Activated naive CD4-positive, alpha-beta T cell treated with anti-CD3 and anti-CD28 coated beads for 36 hours (primary cell): ENCODE measurements at regions of chr11 and their contacts with region 1.

Region 1: GRCh38 chr11:84564180-84564866 is 1062.8 kb downstream of the DLG2 start:
- DNase-seq: peak; percentile 54
- H3K4me3 Mint-ChIP-seq: no peak overlapping the region
- H3K27ac Mint-ChIP-seq: no peak overlapping the region
- H3K4me1 Mint-ChIP-seq: no peaks in the 10 kb centered on the region
- H3K27me3 Mint-ChIP-seq: no peaks in the 10 kb centered on the region

Region 2: DNA sequence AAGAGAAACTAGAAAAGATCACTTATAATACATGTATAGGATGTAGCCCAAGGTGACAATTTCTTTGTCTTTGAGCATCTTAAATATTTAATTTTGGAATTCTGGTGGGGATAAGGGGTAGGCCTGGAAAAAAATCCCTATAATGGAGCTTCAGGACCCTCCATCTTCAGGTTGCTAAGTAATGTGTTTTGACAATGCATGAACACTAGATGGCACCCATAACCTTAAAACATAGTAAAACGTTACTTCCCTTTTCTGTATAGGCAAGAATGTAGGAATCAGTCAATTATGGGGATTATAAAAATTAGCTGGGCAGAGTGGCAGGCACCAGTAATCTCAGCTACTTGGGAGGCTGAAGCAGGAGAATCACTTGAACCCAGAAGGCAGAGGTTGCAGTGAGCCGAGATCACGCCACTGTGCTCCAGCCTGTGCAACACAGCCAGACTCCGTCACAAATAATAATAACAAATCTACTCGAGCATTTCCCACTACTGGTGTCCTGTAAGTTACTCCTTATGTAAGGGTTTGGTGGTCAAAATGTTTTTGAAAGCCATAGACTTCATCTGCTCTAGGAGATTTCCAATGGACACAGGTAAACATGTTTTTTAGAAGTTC is 736.3 kb before region 1 on chr11:
- CTCF ChIA-PET with region 1: interaction called, 4 read pairs
- intact Hi-C with region 1: loop called (anchors 1 kb)
- DNase-seq: no peak
- H3K4me3 Mint-ChIP-seq: no peak overlapping the region
- H3K27ac Mint-ChIP-seq: no peak overlapping the region
- H3K4me1 Mint-ChIP-seq: peaks cover 2% of the 10 kb centered on the region
- H3K27me3 Mint-ChIP-seq: no peaks in the 10 kb centered on the region

Region 3: DNA sequence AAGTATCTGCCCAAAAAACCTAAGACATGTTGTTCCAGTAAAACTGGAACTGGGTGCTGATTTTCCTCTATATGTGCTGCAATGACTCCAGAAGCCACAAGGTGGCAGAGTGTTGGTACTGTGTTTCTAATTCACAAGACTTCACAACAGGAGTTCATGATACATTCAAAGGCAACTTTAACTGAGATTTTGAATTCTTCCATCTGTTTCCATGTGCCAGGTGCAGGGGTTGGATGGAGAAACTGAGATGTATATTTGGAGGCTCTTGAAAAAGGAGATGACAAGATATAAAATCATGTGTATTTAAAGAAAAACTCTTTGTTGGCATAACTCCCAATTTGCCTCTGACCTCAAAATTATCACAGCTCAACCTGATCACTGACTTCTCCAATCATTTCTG is 179.6 kb before region 1 on chr11:
- CTCF ChIA-PET with region 1: interaction called, 4 read pairs
- intact Hi-C with region 1: loop called (anchors 1 kb)
- DNase-seq: peak; percentile 51
- H3K4me3 Mint-ChIP-seq: no peak overlapping the region
- H3K27ac Mint-ChIP-seq: no peak overlapping the region
- H3K4me1 Mint-ChIP-seq: no peaks in the 10 kb centered on the region
- H3K27me3 Mint-ChIP-seq: no peaks in the 10 kb centered on the region

Region 4: DNA sequence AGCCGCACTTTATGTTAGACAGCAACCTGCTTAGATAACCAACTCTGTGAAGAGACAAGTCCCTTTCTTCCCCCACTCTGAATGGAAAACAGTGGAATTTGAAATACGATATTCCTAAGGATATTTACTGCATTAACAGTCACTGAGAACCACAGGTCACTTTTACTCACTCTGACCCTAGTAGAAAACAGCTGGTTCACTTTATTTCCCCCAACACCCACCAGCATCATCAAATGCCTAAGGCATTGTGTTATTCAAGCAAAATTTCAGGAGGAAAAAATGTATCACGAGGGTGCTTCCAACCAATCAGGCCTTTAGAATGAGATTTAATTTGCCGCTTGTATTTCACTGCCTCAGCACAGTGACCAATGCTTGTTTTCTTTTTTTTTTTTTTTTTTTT is 144.1 kb before region 1 on chr11:
- CTCF ChIA-PET with region 1: no interaction called
- intact Hi-C with region 1: no loop called
- DNase-seq: no peak
- H3K4me3 Mint-ChIP-seq: no peak overlapping the region
- H3K27ac Mint-ChIP-seq: no peak overlapping the region
- H3K4me1 Mint-ChIP-seq: no peaks in the 10 kb centered on the region
- H3K27me3 Mint-ChIP-seq: no peaks in the 10 kb centered on the region

Region 5: DNA sequence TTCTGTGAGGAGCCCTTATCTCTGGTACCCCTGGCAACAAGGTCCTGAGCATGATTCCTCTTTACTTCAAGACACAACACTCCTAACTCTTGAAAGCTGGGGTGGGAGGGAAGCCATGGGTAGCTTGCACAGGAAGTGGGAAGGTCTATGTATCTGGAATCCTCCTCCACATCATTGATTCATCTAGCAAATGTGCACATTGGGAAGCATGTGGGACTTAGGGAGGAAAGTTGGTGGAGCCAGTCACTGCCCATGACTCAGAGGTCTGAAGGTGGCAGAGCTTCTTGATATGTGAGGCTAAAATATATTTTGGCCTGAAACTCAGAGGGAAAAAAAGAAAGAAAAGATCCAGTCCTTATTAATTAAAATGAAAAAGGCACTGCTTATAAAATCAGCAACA is 61.9 kb after region 1 on chr11:
- CTCF ChIA-PET with region 1: no interaction called
- intact Hi-C with region 1: no loop called
- DNase-seq: no peak
- H3K4me3 Mint-ChIP-seq: no peak overlapping the region
- H3K27ac Mint-ChIP-seq: no peak overlapping the region
- H3K4me1 Mint-ChIP-seq: no peaks in the 10 kb centered on the region
- H3K27me3 Mint-ChIP-seq: no peaks in the 10 kb centered on the region